Mucosa of descending colon (tissue), 3 donors: ENCODE measurements at regions of chr11 and their contacts with region 1.

Region 1: DNA sequence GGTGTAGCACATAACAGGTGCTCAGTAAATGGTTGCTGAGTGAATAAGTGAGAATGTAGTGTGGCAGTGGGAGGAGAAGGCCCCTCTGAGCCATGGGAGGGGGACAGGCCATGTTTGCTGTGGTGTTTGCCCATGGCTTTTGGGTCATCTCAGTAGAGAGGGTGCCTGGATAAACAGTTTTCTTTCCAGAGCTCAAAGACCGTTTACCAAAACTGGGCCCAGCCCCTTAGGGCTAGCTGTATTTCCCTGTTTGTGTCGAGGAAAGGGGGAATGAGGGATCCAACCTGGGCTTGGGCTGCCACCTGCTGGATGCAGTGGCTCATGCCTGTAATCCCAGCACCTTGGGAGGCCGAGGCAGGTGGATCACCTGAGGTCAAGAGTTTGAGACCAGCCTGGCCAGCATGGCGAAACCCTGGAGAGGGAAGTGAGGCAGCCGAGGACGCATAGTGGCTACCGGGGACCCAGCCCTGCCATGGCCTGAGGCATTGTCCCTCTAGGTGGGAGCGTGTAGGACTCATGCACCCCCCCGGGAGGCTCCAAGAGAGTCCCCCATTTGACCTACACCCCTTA is 8.7 kb upstream of the LTO1 start:
- DNase-seq: peak in 2 of 3 donors; percentile 47 to 57
- ATAC-seq: peak; percentile 62
- H3K4me3 ChIP-seq: no peak overlapping the region
- H3K4me1 ChIP-seq: no peaks in the 10 kb centered on the region
- CTCF ChIP-seq: no peak

Region 2: DNA sequence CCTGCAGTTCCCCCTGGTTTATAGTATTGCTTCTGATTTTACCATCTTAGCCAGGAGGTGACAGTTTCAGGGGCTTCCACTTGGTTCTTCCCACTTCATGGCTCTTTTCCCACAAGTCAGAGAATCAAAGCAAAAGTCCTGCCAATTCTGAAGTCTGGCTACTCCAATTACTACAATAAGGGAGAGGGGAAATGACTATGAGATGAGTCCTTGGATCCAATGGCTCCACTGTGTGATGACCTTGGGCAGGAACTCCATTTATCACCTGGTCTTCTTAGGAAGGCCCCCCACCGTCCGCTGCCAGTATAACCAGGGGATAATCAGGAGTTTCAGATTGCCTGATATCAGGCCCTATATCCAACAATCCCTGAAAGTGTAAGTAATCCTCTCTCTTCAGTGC is 74.5 kb before region 1 on chr11:
- intact Hi-C with region 1: no loop called
- DNase-seq: no peak
- ATAC-seq: no peak
- H3K4me3 ChIP-seq: no peak overlapping the region
- H3K4me1 ChIP-seq: no peaks in the 10 kb centered on the region
- CTCF ChIP-seq: no peak

Region 3: GRCh38 chr11:69791276-69792180 is 107.7 kb after region 1 on chr11:
- intact Hi-C with region 1: no loop called
- DNase-seq: no peak
- ATAC-seq: no peak
- H3K4me3 ChIP-seq: no peak overlapping the region
- H3K4me1 ChIP-seq: no peaks in the 10 kb centered on the region
- CTCF ChIP-seq: no peak

Region 4: GRCh38 chr11:69888483-69889076 is 204.7 kb after region 1 on chr11:
- intact Hi-C with region 1: loop called in 1 of 2 experiments (anchors 5 kb)
- DNase-seq: peak; percentile 60 to 88 (median 85)
- ATAC-seq: peak; percentile 59
- H3K4me3 ChIP-seq: no peak overlapping the region
- H3K4me1 ChIP-seq: peaks cover 38% of the 10 kb centered on the region
- CTCF ChIP-seq: peak; percentile 82